Right ventricle myocardium superior (tissue), 1 donor: ENCODE measurements at regions of chr6 and their contacts with region 1.

Region 1: DNA sequence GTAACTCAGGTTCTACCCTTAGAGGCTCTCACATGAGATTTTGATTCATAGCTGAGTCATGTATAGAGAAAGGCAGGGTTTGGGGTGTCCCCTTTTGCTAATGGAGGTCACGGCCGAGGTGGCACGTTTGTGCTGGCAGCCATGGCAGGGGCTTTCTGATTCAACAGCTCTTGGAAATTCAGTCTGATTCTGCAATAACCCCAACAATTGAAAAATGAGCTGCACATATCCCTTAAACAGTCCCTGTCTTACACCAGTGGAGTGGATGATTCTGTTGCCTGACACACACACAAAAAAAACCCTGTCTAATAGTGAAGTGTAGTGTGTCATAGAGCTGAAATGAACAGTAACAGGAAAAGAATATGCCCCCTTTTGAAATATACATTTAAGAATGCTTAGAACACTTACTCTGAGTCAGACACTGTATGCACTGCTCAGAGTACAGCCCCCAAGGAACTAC is 40.4 kb upstream of the ARG1 start:
- DNase-seq: no peak
- ATAC-seq: no peak

Region 2: DNA sequence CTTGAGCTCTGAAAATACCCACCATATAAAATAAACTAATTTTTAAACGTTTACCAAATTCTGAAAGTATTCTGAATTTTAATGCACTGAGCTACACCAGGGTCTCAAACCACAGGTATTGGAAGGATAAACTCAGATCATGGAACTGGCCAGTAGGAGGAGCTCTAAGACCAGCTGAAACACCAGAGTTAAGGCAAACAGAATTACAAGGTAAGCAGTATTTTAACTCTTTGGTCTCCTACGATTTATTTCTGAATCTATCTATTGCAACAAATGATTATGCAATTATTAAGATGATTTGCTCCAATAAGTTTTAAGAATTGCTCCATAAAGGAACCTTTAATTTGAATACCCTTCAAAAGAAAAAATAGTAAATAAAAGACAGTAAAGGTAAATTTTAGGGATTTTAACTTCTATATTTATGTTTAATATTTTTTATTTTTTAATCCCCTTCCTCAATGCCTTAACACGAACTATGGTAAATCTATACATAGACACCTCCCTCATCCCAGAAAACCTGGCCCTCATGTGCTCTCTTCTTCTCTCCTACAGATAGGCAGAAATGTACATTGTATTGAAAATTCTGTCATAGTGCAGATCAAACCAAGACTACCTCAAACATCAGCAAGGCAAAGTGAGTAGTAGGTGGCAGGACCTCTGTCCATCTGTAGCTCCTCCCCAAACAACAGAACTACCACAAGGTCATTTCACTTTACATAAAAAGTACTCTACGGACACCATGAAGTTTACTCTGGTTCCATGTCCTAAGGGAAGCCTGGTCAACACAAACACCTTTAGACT is 647.0 kb before region 1 on chr6:
- intact Hi-C with region 1: loop called (anchors 5 kb)
- DNase-seq: no peak
- ATAC-seq: peak; percentile 94

Region 3: GRCh38 chr6:131199568-131200272 is 332.9 kb before region 1 on chr6:
- intact Hi-C with region 1: loop called (anchors 10 kb)
- DNase-seq: no peak
- ATAC-seq: peak; percentile 87